ENCODE measurements at regions of chrX and their contacts with region 1.

Region 1: DNA sequence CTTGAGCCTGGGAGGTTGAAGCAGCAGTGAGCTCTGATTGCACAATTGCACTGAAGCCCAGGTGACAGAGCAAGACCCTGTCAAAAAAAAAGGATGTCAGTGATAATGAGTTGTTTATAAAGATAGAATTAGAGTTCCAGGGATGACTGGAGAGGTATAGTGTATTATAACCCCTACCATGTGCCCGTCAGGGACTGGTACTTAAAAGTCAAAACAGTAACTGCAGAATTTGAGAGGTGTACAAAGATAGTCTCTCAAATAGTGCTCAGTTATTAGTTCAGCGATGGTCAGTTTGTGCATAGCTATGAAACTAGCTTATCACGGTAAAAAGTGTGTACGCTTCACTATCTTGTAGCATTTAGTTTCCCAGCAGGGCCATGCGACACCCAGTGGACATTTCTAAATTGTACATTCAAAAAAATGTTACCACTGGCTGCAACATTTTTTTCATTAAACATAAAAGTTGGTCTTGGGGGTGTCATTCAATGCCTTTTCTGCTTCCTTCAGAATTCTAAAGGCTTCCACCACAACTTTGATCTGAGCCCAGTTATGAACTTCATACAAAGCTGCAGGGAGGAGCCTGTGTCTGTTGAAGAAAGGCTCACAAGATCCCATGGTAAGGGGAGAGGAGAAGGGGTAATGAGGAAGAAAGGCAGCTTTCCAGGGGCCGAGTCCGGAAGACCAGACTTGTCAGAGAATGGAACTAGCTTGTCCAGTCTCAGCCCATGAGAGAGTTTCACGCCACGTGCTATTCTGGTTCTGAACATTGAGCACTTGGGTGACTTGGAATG is 9.2 kb upstream of the GYG2 start:
- DNase-seq: peak; percentile 79
- H3K4me3 ChIP-seq: no peak overlapping the region
- H3K27ac ChIP-seq: peak overlapping the region; percentile 91
- H3K4me1 ChIP-seq: peaks cover 49% of the 10 kb centered on the region
- H3K27me3 ChIP-seq: no peaks in the 10 kb centered on the region
- CTCF ChIP-seq: peak; percentile 77

Region 2: DNA sequence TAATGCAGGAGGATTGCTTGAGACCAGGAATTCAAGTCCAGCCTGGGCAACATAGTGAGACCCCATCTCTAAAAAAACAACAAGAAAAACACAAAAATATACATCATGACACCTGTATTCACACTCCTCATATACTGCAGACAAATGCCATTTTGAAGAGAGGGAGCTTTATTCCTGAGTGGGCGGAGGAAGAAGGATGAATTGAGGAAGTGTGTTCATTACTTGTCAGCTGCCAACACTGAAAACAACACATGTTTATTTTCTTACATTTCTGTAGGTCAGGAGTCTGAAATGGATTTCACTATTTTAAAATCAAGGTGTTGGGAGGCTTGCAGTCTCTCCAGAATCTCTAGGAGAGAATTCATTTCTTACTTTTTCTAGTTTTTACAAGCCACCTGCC is 175.7 kb before region 1 on chrX:
- CTCF ChIA-PET with region 1: no interaction called
- POLR2A ChIA-PET with region 1: no interaction called
- intact Hi-C with region 1: loop called (anchors 2 kb)
- DNase-seq: no peak
- H3K4me3 ChIP-seq: no peak overlapping the region
- H3K27ac ChIP-seq: no peak overlapping the region
- H3K4me1 ChIP-seq: no peaks in the 10 kb centered on the region
- H3K27me3 ChIP-seq: no peaks in the 10 kb centered on the region
- CTCF ChIP-seq: no peak

Region 3: GRCh38 chrX:2654436-2655340 is 164.9 kb before region 1 on chrX:
- CTCF ChIA-PET with region 1: no interaction called
- POLR2A ChIA-PET with region 1: no interaction called
- intact Hi-C with region 1: no loop called
- DNase-seq: no peak
- H3K4me3 ChIP-seq: no peak overlapping the region
- H3K27ac ChIP-seq: no peak overlapping the region
- H3K4me1 ChIP-seq: peaks cover 10% of the 10 kb centered on the region
- H3K27me3 ChIP-seq: no peaks in the 10 kb centered on the region
- CTCF ChIP-seq: no peak

Region 4: GRCh38 chrX:2765549-2765830 is 54.0 kb before region 1 on chrX:
- CTCF ChIA-PET with region 1: no interaction called
- POLR2A ChIA-PET with region 1: no interaction called
- intact Hi-C with region 1: loop called (anchors 2 kb)
- DNase-seq: no peak
- H3K4me3 ChIP-seq: no peak overlapping the region
- H3K27ac ChIP-seq: peak overlapping the region; percentile 78
- H3K4me1 ChIP-seq: peaks cover 27% of the 10 kb centered on the region
- H3K27me3 ChIP-seq: no peaks in the 10 kb centered on the region
- CTCF ChIP-seq: no peak

Region 5: DNA sequence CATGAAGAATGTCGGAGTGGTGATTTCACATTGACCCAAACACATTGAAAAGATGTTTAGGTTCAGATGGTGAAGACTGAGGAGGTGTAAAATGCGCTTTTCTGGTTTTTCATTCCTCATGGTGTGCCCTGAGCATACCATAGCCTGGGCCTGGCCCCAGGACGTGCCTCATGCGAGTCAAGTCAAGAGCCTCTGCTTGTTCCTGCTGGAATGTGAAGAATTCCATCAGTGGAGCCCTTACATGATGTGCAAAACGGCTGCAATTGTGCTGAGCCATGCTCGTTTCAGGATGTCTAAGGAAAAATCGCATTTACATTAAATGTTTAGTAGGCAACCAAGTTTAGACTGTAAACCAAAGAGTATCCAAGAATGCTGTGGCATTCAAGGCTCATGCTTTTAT is 44.1 kb after region 1 on chrX:
- CTCF ChIA-PET with region 1: no interaction called
- POLR2A ChIA-PET with region 1: no interaction called
- intact Hi-C with region 1: no loop called
- DNase-seq: no peak
- H3K4me3 ChIP-seq: no peak overlapping the region
- H3K27ac ChIP-seq: no peak overlapping the region
- H3K4me1 ChIP-seq: no peaks in the 10 kb centered on the region
- H3K27me3 ChIP-seq: no peaks in the 10 kb centered on the region
- CTCF ChIP-seq: no peak

Measured in A673 (cell line).